ENCODE measurements at regions of chr18 and their contacts with region 1.

Region 1: GRCh38 chr18:55343396-55344073 is 244.5 kb downstream of the TCF4 start:
- DNase-seq: no peak
- H3K4me3 ChIP-seq: no peak overlapping the region
- CTCF ChIP-seq: peak; percentile 60

Region 2: DNA sequence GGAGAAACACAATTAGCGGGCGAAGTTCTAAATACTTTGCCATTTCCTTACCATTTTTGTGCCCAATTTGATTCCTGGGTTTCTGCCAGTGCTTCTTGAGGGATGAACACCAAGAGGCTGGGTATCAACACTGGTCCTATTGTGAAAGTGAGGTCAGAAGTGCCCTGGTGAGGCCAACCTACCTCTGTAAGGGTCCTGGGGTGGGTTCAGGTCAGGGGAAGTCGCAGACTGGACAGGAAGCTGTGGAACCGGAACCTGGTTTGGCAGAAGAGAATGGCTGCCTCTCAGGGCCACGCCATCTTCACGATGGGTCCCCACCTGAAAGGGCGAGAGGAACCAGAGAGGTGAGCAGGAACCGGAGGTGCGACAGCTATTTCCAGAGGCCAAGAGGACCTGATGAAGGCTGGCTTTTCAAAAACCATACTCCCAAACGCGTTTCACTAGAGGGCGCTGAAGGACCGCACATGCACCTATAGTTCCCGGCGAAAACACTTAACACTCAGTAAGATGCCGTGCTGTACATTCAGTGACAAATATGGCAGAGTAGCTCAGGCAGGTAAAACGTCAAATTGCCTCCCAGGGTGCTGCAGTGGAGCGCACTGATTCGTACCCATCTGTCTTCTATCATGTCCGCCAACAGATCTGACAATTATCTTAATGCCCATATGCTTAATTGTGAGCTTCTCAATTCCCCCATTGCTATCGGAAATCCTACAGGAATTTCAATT is 109.0 kb before region 1 on chr18:
- in situ Hi-C with region 1: no loop called
- DNase-seq: peak; percentile 71
- H3K4me3 ChIP-seq: no peak overlapping the region
- CTCF ChIP-seq: peak; percentile 80

Region 3: DNA sequence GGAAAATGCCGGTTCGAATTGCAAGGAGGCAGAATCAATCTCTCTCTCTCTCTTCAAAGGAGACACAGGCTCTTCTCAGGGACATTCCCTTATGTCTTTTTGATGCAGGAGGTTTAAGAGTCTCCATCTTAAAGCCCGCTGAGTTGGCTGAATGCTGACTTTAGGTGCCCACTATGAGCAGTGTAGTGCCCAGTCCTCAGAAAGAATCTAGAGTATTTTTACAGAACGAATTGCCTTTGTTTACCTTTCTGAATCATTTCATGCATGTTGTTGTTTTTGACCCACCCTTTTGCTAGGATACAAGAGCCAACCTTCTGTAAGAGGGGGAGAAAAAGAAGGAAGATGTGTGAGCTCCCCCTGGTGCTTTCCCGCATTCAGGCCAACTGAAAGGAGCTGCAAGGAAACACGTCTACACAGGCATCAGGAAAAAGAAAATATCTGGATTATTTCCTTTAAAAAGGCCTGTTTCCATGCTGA is 438.0 kb after region 1 on chr18:
- in situ Hi-C with region 1: loop called (anchors 25 kb)
- DNase-seq: peak; percentile 53
- H3K4me3 ChIP-seq: no peak overlapping the region
- CTCF ChIP-seq: peak; percentile 88

Measured in astrocyte of the cerebellum (primary cell).